ENCODE measurements at regions of chr13 and their contacts with region 1.

Region 1: DNA sequence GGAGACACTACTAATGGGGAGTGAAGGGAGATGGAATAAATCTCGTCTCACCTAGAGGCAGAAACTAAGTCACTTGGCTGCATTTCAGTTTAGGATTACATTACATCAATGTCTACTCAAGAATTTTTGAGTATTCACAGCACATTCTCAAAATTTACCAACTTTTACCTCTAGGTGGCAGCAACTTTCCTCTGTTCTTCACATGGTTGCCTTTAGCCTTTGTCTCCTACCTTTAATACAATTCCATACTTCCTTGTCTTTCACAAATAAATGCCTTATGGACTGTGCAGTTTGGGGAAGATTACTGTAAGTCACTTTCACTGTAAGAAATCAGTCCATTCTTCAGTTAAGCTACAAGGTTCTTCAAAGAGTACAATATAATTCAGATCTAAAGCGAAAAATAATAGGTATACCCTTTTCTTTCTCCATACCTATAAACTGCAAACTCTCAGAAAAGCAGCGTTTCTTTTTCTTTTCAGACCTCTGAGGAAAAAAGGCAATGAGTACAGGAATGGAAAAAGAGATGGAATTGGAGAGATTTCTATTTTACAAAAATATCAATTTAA is 379.4 kb downstream of the KLF12 start:
- DNase-seq: peak; percentile 32
- H3K4me3 ChIP-seq: no peak overlapping the region
- H3K27ac ChIP-seq: no peak overlapping the region
- H3K27me3 ChIP-seq: no peaks in the 10 kb centered on the region
- CTCF ChIP-seq: peak; percentile 72

Region 2: GRCh38 chr13:73288596-73288995 is 466.2 kb before region 1 on chr13:
- CTCF ChIA-PET with region 1: no interaction called
- POLR2A ChIA-PET with region 1: no interaction called
- DNase-seq: no peak
- H3K4me3 ChIP-seq: no peak overlapping the region
- H3K27ac ChIP-seq: no peak overlapping the region
- H3K27me3 ChIP-seq: no peaks in the 10 kb centered on the region
- CTCF ChIP-seq: no peak

Region 3: DNA sequence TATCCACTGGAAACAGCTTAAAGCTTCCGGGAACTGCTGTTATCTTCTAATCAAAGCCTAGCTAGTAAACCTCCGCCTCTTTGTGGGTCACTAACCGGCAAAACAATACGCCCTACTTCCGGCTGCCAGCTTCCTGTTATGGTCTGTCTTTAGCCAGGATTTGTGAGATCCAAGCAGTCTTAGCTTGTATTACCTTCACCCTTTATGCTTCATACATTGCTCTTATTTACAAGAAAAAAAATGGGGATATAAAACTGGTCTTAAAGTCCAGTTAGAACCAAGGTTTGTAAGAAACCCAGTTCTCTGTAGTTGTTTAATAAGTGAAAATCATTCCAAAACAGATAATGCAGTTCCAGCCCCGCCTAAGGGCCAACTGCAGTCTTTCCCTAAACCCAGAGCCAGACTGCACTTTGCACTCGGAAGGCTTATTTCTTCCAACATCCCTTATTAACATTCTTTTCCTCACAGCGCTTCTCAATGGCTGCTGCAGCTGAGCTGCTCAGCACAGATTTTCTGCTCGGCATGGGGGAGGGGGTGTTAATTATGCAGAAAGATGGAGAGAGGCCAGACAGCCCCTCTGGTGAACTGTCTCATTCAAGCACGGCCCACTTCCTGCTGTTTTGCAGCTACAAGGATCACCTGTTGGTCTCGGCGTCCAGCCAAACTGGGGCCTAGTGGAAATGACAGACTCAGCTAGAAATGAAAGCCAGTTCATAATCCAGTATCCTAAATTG is 11.0 kb after region 1 on chr13:
- CTCF ChIA-PET with region 1: interaction called, 11 read pairs
- POLR2A ChIA-PET with region 1: no interaction called
- DNase-seq: no peak
- H3K4me3 ChIP-seq: no peak overlapping the region
- H3K27ac ChIP-seq: peak overlapping the region; percentile 33
- H3K27me3 ChIP-seq: no peaks in the 10 kb centered on the region
- CTCF ChIP-seq: no peak

Measured in AG04450 (cell line).